Naive thymus-derived CD4-positive, alpha-beta T cell (primary cell): ENCODE measurements at regions of chr16 and their contacts with region 1.

Region 1: DNA sequence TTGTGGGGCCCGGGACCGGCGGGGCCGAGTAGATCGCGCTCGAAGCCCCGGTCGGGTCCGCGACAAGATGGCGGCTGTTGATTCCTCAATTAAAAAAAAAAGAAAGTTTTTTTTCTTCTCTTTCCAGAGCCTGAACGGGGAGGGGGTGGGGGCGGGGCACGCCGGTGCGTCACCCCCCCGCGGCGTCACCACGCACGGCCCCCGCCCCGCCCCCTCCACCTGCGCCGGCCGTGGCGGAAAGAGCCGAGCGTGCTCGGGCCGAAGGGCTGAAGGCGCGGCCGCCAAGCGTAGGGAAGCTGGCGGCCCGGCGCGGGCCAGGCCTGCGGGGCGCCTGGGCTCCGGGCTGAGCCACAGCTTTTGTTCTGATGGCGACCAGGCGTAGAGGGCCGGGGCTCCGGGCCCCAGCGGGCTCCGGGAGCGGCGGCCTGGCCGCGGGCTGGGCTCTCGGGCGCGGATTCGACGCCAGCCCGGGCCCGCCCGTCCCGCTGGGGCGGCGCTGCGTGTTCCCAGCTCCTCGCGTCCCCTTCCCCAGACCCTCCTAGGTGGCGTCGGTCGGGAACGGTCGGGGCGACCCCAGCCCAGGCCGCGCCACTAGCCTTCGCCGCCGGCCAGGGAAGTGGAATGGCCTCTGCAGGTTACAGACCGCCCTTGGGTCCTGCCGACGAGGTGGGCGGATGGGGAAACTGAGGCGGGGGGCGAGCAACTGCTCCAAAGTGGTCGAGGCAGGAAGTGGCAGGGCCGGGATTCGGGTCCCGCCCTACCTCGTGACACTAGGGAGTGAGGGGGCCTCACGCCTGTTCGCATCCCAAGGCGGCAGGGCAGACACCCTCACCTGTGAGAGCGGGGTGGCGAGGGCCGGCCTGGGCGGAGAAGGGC is at the start of gene CREBBP:
- DNase-seq: peak; percentile 79 to 92 (median 89)
- ATAC-seq: peak; percentile 94
- H3K4me3 ChIP-seq: peak within 1 kb of the TSS; percentile 82
- H3K4me3 Mint-ChIP-seq: peak within 1 kb of the TSS; percentile 77 to 100 (median 94)
- H3K27ac ChIP-seq: peak within 1 kb of the TSS; percentile 85
- H3K27ac Mint-ChIP-seq: peak within 1 kb of the TSS; percentile 71 to 96 (median 91)
- H3K4me1 ChIP-seq: peaks cover 23 to 24% of the 10 kb centered on the region in 2 donors
- H3K4me1 Mint-ChIP-seq: peaks cover 32 to 46% (median 39%) of the 10 kb centered on the region in 7 donors
- H3K27me3 ChIP-seq: no peaks in the 10 kb centered on the region
- H3K27me3 Mint-ChIP-seq: peaks cover 0 to 8% (median 6%) of the 10 kb centered on the region in 5 donors
- total RNA-seq, gene CREBBP: 73.6 to 194 (median 137) TPM

Region 2: DNA sequence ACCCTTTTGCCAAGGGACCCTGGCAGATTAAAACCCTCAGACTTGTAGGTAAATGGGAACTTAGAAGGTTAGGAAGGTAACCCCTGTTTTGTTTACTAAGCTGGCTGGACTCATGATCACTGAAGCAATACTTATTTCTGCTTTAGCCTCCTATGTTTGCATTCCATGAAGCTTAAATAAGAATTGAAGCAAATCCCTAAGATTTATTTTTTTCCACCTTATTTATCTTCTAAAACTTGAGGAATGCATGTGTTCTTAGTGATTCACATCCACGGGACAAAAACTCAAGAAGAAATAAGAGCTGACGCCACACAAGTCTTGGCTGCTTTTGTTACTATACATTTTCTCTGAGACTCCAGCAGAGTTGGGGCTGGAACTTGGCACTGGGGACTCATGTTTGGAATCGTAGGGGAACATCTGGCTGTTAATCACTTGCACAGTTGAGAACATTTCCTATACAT is 344.6 kb before region 1 on chr16:
- CTCF ChIA-PET with region 1: no interaction called
- POLR2A ChIA-PET with region 1: no interaction called
- intact Hi-C with region 1: no loop called
- DNase-seq: no peak
- ATAC-seq: no peak
- H3K4me3 ChIP-seq: no peak overlapping the region
- H3K4me3 Mint-ChIP-seq: no peak overlapping the region
- H3K27ac ChIP-seq: no peak overlapping the region
- H3K27ac Mint-ChIP-seq: peak overlapping the region in 8 of 9 donors; percentile 21 to 89 (median 64)
- H3K4me1 ChIP-seq: no peaks in the 10 kb centered on the region
- H3K4me1 Mint-ChIP-seq: peaks cover 4 to 19% (median 11%) of the 10 kb centered on the region in 7 donors
- H3K27me3 ChIP-seq: no peaks in the 10 kb centered on the region
- H3K27me3 Mint-ChIP-seq: no peaks in the 10 kb centered on the region

Region 3: DNA sequence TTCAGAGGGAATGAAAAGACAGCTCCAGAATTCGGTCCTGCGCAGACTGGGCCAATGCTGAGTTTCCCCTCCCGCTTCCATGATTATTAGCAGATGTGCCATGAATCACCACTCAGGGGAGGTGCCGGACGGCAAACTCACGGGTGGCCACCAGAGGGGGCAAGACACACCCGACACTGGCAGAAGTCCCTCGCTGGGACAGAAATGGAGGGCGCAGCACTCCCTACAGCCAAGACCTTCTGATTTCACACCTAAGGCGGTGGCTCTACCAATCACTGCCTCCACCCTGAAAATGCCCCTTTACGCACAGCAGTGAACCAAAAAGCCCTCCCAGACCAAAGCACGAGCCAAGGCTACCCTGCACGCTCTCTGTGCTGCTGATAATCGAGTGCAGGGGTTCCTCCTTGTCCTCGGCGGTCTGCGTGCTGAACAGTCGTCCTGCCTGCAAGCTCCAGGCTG is 190.4 kb before region 1 on chr16:
- CTCF ChIA-PET with region 1: interaction called, 4 read pairs
- POLR2A ChIA-PET with region 1: interaction called, 4 read pairs
- intact Hi-C with region 1: loop called (anchors 1 kb)
- DNase-seq: peak; percentile 65 to 81 (median 75)
- ATAC-seq: peak; percentile 100
- H3K4me3 ChIP-seq: no peak overlapping the region
- H3K4me3 Mint-ChIP-seq: peak overlapping the region in 5 of 10 donors; percentile 17 to 71 (median 42)
- H3K27ac ChIP-seq: no peak overlapping the region
- H3K27ac Mint-ChIP-seq: peak overlapping the region in 5 of 9 donors; percentile 6 to 61 (median 53)
- H3K4me1 ChIP-seq: peaks cover 3 to 7% of the 10 kb centered on the region in 2 donors
- H3K4me1 Mint-ChIP-seq: peaks cover 7 to 10% (median 9%) of the 10 kb centered on the region in 7 donors
- H3K27me3 ChIP-seq: no peaks in the 10 kb centered on the region
- H3K27me3 Mint-ChIP-seq: no peaks in the 10 kb centered on the region

Region 4: DNA sequence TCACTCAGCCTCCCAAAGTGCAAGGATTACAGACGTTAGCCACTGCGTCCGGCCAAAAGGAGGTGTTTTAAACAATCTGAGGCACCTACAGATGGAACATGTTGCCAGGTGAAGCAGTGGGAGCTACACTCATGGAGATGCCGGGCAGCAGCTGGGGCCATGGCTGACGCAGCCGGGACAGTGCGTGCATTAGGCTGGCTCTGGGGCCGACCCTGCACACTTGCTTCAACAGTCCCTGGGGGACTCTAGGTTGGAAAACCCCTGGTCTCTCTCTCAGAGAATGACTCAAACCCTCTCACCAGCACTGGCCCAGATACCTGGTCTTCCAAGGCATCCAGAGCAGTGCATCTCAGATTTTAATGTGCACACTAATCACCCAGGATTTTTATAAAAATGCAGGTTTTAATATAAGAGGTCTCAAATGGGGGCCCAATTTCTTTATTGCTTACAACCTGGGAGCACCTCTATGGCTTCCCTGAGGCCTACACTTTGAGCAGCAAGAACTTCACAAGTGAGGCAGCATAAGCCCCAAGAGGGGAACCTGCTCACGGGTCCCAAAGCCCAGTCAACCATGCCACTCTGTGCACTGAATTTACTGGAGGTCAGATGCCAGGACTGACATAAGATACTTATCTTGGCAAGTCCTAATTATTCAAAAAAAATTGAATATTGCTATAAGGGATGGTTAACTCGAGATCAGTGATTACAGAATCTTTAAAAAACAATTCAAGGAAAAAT is 92.8 kb before region 1 on chr16:
- CTCF ChIA-PET with region 1: interaction called, 3 read pairs
- POLR2A ChIA-PET with region 1: interaction called, 3 read pairs
- intact Hi-C with region 1: loop called in 1 of 2 experiments (anchors 5 kb)
- DNase-seq: no peak
- ATAC-seq: no peak
- H3K4me3 ChIP-seq: no peak overlapping the region
- H3K4me3 Mint-ChIP-seq: peak overlapping the region in 4 of 10 donors; percentile 14 to 70 (median 42)
- H3K27ac ChIP-seq: no peak overlapping the region
- H3K27ac Mint-ChIP-seq: no peak overlapping the region
- H3K4me1 ChIP-seq: peaks cover 26 to 28% of the 10 kb centered on the region in 2 donors
- H3K4me1 Mint-ChIP-seq: peaks cover 48 to 76% (median 68%) of the 10 kb centered on the region in 7 donors
- H3K27me3 ChIP-seq: no peaks in the 10 kb centered on the region
- H3K27me3 Mint-ChIP-seq: peaks cover 0 to 6% (median 0%) of the 10 kb centered on the region in 5 donors

Region 5: GRCh38 chr16:3909791-3910570 is 29.1 kb after region 1 on chr16:
- CTCF ChIA-PET with region 1: no interaction called
- POLR2A ChIA-PET with region 1: no interaction called
- intact Hi-C with region 1: no loop called
- DNase-seq: no peak
- ATAC-seq: no peak
- H3K4me3 ChIP-seq: no peak overlapping the region
- H3K4me3 Mint-ChIP-seq: no peak overlapping the region
- H3K27ac ChIP-seq: no peak overlapping the region
- H3K27ac Mint-ChIP-seq: no peak overlapping the region
- H3K4me1 ChIP-seq: no peaks in the 10 kb centered on the region
- H3K4me1 Mint-ChIP-seq: peaks cover 0 to 3% (median 0%) of the 10 kb centered on the region in 7 donors
- H3K27me3 ChIP-seq: no peaks in the 10 kb centered on the region
- H3K27me3 Mint-ChIP-seq: peaks cover 0 to 6% (median 0%) of the 10 kb centered on the region in 5 donors

Region 6: DNA sequence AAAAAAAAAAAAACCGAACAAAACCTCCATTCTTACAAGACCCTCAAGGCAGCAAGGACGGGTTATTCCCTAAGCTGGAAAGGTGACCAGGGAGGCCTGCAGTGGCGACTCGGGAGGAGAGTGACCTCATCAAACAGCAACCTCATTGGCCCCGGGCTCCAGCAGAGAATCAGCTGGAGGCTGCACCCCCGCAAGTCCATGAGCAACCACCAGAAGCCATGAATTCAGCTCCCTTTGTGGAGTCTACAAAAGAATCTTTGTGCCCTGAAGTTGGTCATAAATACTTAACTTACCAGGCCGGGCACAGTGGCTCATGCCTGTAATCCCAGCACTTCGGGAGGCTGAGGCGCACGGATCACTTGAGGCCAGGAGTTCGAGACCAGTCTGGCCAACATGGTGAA is 80.6 kb after region 1 on chr16:
- CTCF ChIA-PET with region 1: no interaction called
- POLR2A ChIA-PET with region 1: no interaction called
- intact Hi-C with region 1: loop called in 1 of 2 experiments (anchors 1 kb)
- DNase-seq: no peak
- ATAC-seq: no peak
- H3K4me3 ChIP-seq: no peak overlapping the region
- H3K4me3 Mint-ChIP-seq: peak overlapping the region in 7 of 10 donors; percentile 2 to 94 (median 74)
- H3K27ac ChIP-seq: no peak overlapping the region
- H3K27ac Mint-ChIP-seq: peak overlapping the region in 5 of 9 donors; percentile 66 to 98 (median 95)
- H3K4me1 ChIP-seq: peaks cover 15 to 23% of the 10 kb centered on the region in 2 donors
- H3K4me1 Mint-ChIP-seq: peaks cover 9 to 34% (median 24%) of the 10 kb centered on the region in 7 donors
- H3K27me3 ChIP-seq: peaks cover 0 to 2% of the 10 kb centered on the region in 2 donors
- H3K27me3 Mint-ChIP-seq: peaks cover 0 to 15% (median 5%) of the 10 kb centered on the region in 5 donors

Region 7: GRCh38 chr16:4416200-4417032 is 535.6 kb after region 1 on chr16 and contains the start of gene CORO7:
- CTCF ChIA-PET with region 1: no interaction called
- POLR2A ChIA-PET with region 1: no interaction called
- intact Hi-C with region 1: loop called in 1 of 2 experiments (anchors 5 kb)
- DNase-seq: peak; percentile 98 to 100 (median 99)
- ATAC-seq: peak; percentile 89
- H3K4me3 ChIP-seq: peak within 1 kb of the TSS; percentile 71
- H3K4me3 Mint-ChIP-seq: peak within 1 kb of the TSS; percentile 88 to 98 (median 95)
- H3K27ac ChIP-seq: peak within 1 kb of the TSS; percentile 98
- H3K27ac Mint-ChIP-seq: peak within 1 kb of the TSS; percentile 91 to 99 (median 98)
- H3K4me1 ChIP-seq: peaks cover 26 to 33% of the 10 kb centered on the region in 2 donors
- H3K4me1 Mint-ChIP-seq: peaks cover 18 to 43% (median 38%) of the 10 kb centered on the region in 7 donors
- H3K27me3 ChIP-seq: no peaks in the 10 kb centered on the region
- H3K27me3 Mint-ChIP-seq: peaks cover 0 to 9% (median 0%) of the 10 kb centered on the region in 5 donors
- total RNA-seq, gene CORO7: 114 to 572 (median 165) TPM